ENCODE measurements at regions of chr2 and their contacts with region 1.

Region 1: GRCh38 chr2:20350753-20351554 is at the start of gene PUM2:
- DNase-seq: peak; percentile 97
- H3K4me3 Mint-ChIP-seq: no peak within 1 kb of the TSS
- H3K27ac Mint-ChIP-seq: peak within 1 kb of the TSS; percentile 80
- H3K4me1 Mint-ChIP-seq: peaks cover 38% of the 10 kb centered on the region
- H3K27me3 Mint-ChIP-seq: no peaks in the 10 kb centered on the region
- total RNA-seq, gene PUM2: 141 to 147 TPM

Region 2: DNA sequence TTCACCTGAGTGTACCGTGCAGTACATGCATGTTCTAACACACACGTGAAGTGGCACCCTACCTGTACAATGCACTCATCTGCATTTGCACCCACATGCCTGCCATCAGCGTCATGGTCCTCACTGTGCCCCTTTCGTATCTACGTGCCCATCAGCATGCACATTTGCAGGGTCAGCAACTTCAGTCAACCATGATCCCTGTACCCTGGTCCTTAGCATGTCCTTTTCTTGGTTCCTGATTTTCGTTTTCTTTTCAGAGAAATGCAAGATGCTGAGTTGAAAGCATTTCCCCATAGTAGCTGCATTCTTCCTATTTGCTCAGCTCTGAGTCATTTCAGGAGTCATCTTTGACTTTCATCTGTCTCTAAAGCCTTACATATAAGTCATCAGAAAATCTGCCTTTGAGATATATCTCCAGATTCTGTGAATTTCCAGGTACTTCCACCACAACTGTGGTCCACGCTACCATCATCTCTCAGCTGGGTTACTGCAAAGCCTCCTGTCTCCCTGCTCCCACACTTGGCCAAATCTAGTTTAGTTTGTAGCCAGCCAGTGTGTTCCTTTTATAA is 14.4 kb after region 1 on chr2:
- CTCF ChIA-PET with region 1: interaction called, 10 read pairs
- POLR2A ChIA-PET with region 1: interaction called, 52 read pairs
- DNase-seq: peak; percentile 74
- H3K4me3 Mint-ChIP-seq: peak overlapping the region; percentile 37
- H3K27ac Mint-ChIP-seq: peak overlapping the region; percentile 85
- H3K4me1 Mint-ChIP-seq: peaks cover 36% of the 10 kb centered on the region
- H3K27me3 Mint-ChIP-seq: peaks cover 7% of the 10 kb centered on the region

Region 3: DNA sequence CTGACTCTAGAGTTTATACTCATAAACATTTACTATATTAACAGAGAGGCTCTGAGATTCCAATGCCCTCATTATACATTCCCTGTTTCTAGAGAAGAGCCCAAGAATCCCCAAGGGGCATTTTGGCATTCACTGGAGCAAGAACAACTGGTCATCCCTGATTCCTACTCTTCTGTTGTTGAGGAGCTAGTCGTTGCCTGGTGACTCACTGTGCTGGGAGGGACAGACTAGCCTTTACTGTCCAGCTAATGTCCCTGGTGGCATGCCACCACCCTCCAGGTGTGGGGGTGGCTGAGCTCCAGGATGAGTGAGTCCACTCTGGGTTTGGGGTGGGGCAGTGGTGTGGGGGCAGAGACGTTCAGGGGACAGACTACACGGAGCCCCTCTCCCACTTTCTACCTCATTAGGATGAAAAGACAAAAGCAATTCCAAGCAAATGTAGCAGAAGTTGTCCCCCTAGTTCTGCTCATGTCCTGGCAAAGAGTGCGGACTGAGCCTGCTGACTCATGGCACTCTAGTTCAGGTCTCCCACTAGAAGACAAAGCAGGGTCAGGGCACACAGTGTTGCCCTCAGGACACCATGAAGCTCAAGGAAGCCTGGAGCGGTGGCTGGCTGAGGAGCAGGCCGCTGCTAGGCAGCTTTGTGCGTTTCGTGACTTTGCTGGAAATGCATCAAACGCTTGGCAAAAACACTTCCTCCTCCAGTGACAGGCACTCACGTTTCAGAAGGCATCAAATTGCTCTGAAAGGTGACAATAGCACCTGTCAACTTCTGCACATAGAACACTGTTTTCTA is 145.3 kb after region 1 on chr2:
- CTCF ChIA-PET with region 1: no interaction called
- POLR2A ChIA-PET with region 1: no interaction called
- DNase-seq: no peak
- H3K4me3 Mint-ChIP-seq: no peak overlapping the region
- H3K27ac Mint-ChIP-seq: no peak overlapping the region
- H3K4me1 Mint-ChIP-seq: no peaks in the 10 kb centered on the region
- H3K27me3 Mint-ChIP-seq: peaks cover 9% of the 10 kb centered on the region